GM13977 (cell line): ENCODE measurements at regions of chr2 and their contacts with region 1.

Region 1: GRCh38 chr2:221124532-221125240 is 447.4 kb downstream of the EPHA4 start:
- DNase-seq: no peak
- CTCF ChIP-seq: no peak

Region 2: GRCh38 chr2:220687231-220687843 is 437.3 kb before region 1 on chr2:
- in situ Hi-C with region 1: no loop called
- DNase-seq: peak; percentile 47
- CTCF ChIP-seq: peak; percentile 80

Region 3: DNA sequence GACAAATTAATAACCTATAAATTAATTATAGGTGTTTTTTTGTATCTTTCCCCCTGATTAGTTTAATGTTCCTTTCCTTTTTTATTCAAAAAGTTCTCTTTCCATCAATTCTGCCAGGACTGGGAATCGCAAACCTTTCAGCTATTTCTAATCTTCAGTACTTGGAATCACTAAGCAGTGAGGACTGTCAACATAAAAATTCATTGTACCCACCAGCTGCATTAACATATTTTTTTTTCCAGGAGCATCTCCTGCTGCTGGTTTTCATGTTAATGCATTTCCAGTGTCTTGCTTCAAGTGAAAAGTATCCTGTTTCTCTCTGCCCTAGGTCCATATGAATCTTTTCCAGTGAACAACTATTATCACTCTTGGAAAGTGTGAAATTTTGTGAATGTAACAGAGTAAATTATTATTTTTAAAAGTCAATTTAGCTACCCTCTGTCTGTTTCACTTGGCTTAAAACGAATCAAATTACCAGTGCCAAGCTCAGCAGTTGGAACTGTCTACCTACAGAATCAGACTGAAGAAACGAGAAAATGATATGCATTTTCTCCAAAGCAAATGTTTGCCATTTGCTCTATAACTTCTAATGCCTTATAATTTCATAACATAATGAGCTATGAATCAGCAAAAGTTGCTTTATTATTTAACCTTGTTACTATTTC is 357.0 kb before region 1 on chr2:
- in situ Hi-C with region 1: no loop called
- DNase-seq: no peak
- CTCF ChIP-seq: no peak

Region 4: GRCh38 chr2:221025398-221025797 is 99.3 kb before region 1 on chr2:
- in situ Hi-C with region 1: loop called (anchors 25 kb)
- DNase-seq: no peak
- CTCF ChIP-seq: no peak

Region 5: GRCh38 chr2:221228214-221228769 is 103.6 kb after region 1 on chr2:
- in situ Hi-C with region 1: no loop called
- DNase-seq: no peak
- CTCF ChIP-seq: no peak